B cell (primary cell): ENCODE measurements at regions of chrX and their contacts with region 1.

Region 1: DNA sequence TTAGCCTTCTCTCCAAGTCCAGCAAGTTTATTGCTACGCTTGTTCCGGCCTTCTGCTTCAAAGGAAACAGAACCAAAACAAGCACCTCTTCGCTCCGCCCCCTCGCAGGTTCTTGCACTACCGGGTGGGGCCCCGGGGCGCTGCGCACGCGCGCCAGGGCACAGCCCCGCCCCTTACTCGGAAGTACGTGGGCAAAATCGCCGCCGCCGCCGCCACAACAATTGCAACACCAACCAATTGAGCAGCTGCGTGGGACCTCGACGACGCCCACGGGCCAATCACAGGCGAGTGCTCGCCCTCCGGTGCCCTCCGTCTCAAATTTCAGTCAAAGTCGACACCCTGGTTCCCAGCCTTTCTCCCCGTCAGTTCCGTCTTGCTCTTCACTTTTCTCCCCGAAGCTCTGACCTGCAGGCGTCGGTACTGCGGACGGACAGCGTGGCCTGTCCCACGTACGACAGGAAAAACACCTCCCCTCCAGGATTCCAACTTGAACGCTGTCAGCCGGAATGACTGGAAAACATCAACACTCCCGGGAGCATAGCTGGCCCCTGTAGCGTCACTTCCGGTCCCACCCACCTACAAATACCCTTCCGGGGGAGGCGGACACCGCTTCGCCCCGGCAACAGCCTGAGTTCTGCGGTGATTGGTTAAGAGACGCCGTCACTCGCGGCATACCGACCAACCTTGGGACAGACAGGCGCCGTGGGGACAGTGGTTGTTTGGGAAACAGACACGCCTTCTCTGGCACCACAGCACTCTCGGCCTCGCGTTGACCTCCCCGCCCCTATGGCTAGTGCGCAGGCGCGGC is 624 bp upstream of the OTUD5 start:
- DNase-seq: peak; percentile 96
- ATAC-seq: peak; percentile 81
- H3K4me3 ChIP-seq: peak overlapping the region; percentile 8 to 75 (median 65)
- H3K4me3 Mint-ChIP-seq: peak overlapping the region; percentile 100
- H3K27ac ChIP-seq: peak overlapping the region; percentile 98 to 99
- H3K27ac Mint-ChIP-seq: peak overlapping the region; percentile 100
- H3K4me1 ChIP-seq: peaks cover 50 to 78% of the 10 kb centered on the region in 2 donors
- H3K4me1 Mint-ChIP-seq: peaks cover 61% of the 10 kb centered on the region
- H3K27me3 ChIP-seq: no peaks in the 10 kb centered on the region
- H3K27me3 Mint-ChIP-seq: no peaks in the 10 kb centered on the region
- CTCF ChIP-seq: no peak

Region 2: DNA sequence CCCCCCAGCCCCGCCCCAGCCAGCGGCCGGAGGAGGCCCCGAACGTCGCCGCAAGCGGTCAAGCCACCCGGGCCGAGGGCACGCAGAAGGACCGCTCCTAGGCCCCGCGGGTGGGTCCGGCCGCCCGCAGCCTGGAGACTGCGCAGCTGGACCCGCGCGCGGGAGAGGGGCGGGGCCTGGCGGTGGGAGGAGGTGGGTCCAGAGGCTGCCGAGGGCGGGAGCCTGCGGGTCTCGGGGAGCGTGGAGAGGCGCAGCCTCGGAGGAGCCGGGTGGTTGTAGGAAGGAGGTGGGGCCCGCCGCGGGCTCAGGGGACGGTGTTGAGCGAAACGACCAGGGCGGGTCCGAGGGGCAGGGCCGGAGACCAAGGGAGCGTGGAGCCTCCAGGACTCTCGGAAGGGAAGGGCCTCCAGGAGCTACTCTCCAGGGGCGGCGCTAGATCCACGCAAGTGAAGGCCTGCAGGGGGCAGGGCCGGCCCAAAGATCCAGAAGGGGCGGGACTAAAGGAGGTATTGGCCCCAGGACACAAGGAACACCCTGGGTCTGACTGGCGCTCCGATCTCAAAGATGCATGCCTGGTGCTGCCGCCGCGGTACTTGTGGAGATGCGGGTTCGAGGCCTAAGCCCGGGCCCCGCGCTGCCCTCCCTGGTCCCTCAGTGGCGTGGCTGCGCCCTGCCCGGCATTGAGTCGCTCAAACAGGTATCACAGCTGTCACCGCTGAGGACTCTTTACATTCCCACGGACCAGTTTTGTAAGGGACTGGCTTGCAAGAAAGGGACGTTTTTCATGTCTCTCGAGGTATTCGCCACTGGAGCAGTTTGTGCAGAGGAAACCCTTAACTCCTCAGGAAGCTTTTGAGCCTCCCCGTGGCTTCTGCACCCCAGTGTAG is 66.4 kb before region 1 on chrX:
- CTCF ChIA-PET with region 1: interaction called, 6 read pairs
- POLR2A ChIA-PET with region 1: interaction called, 8 read pairs
- intact Hi-C with region 1: loop called (anchors 2 kb)
- DNase-seq: peak; percentile 87
- ATAC-seq: peak; percentile 84
- H3K4me3 ChIP-seq: peak overlapping the region in 4 of 5 experiments; percentile 46 to 65 (median 60)
- H3K4me3 Mint-ChIP-seq: peak overlapping the region; percentile 84
- H3K27ac ChIP-seq: peak overlapping the region in 1 of 2 donors; percentile 48
- H3K27ac Mint-ChIP-seq: peak overlapping the region; percentile 73
- H3K4me1 ChIP-seq: peaks cover 6 to 9% of the 10 kb centered on the region in 2 donors
- H3K4me1 Mint-ChIP-seq: peaks cover 19% of the 10 kb centered on the region
- H3K27me3 ChIP-seq: no peaks in the 10 kb centered on the region
- H3K27me3 Mint-ChIP-seq: no peaks in the 10 kb centered on the region
- CTCF ChIP-seq: peak; percentile 60

Region 3: DNA sequence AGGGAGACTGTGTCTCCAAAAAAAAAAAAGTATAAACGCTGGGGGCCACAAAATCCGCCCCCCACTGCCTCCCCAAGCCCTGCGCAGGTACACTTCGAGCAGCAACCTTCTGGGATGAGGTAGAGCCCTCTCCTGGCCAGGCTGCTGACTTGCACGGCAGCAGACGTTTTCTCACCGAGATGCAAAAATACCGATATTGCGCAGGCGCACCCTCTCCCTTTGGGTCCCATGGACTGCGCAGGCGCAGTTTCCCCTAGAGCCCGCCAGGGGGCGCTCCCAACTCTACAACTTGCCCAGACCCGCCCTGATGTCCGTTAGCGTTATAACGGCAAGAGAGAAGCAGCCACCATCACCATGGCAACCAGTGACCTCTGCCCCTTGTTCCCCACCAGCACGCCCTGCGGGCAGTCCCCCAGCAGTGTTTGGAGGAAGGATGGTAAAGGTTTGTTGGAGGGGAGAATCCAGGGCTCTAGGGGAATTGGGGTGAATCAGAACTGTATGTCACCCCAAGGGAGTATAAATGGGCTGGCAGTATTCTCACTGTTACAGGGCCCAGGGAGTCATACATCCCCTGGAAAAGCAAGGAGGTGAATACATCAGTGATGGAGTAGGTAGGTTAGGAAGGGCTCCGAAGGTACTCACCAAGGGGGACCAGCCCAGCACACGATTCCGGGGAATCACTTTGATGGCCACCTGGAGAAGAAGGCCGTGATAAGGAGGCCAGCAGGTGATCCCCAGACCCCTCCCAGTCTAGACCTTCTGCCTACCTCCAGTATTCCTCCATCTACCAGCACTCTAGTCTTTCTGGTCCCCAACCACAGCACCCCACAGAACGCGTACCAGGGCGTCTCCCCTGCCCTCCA is 40.7 kb before region 1 on chrX:
- CTCF ChIA-PET with region 1: interaction called, 4 read pairs
- POLR2A ChIA-PET with region 1: interaction called, 10 read pairs
- intact Hi-C with region 1: loop called (anchors 1 kb)
- DNase-seq: peak; percentile 92
- ATAC-seq: peak; percentile 46
- H3K4me3 ChIP-seq: peak overlapping the region; percentile 67 to 94 (median 86)
- H3K4me3 Mint-ChIP-seq: peak overlapping the region; percentile 98
- H3K27ac ChIP-seq: peak overlapping the region; percentile 84
- H3K27ac Mint-ChIP-seq: peak overlapping the region; percentile 96
- H3K4me1 ChIP-seq: peaks cover 34 to 56% of the 10 kb centered on the region in 2 donors
- H3K4me1 Mint-ChIP-seq: peaks cover 51% of the 10 kb centered on the region
- H3K27me3 ChIP-seq: no peaks in the 10 kb centered on the region
- H3K27me3 Mint-ChIP-seq: no peaks in the 10 kb centered on the region
- CTCF ChIP-seq: peak; percentile 74

Region 4: GRCh38 chrX:49002091-49002935 is 44.3 kb after region 1 on chrX and contains the start of gene GRIPAP1:
- CTCF ChIA-PET with region 1: no interaction called
- POLR2A ChIA-PET with region 1: interaction called, 16 read pairs
- intact Hi-C with region 1: loop called (anchors 1 kb)
- DNase-seq: peak; percentile 93
- ATAC-seq: peak; percentile 85
- H3K4me3 ChIP-seq: peak within 1 kb of the TSS; percentile 66 to 93 (median 86)
- H3K4me3 Mint-ChIP-seq: peak within 1 kb of the TSS; percentile 95
- H3K27ac ChIP-seq: peak within 1 kb of the TSS; percentile 97 to 99
- H3K27ac Mint-ChIP-seq: peak within 1 kb of the TSS; percentile 98
- H3K4me1 ChIP-seq: peaks cover 8 to 14% of the 10 kb centered on the region in 2 donors
- H3K4me1 Mint-ChIP-seq: peaks cover 28% of the 10 kb centered on the region
- H3K27me3 ChIP-seq: no peaks in the 10 kb centered on the region
- H3K27me3 Mint-ChIP-seq: no peaks in the 10 kb centered on the region
- CTCF ChIP-seq: no peak
- total RNA-seq, gene GRIPAP1: 143 and 150 TPM in 2 replicates

Region 5: GRCh38 chrX:49191033-49191871 is 233.2 kb after region 1 on chrX:
- CTCF ChIA-PET with region 1: interaction called, 3 read pairs
- POLR2A ChIA-PET with region 1: interaction called, 3 read pairs
- intact Hi-C with region 1: loop called (anchors 1 kb)
- DNase-seq: peak; percentile 95
- ATAC-seq: peak; percentile 84
- H3K4me3 ChIP-seq: peak overlapping the region in 4 of 5 experiments; percentile 62 to 78 (median 70)
- H3K4me3 Mint-ChIP-seq: peak overlapping the region; percentile 95
- H3K27ac ChIP-seq: peak overlapping the region; percentile 55 to 71
- H3K27ac Mint-ChIP-seq: peak overlapping the region; percentile 96
- H3K4me1 ChIP-seq: peaks cover 0 to 20% of the 10 kb centered on the region in 2 donors
- H3K4me1 Mint-ChIP-seq: peaks cover 28% of the 10 kb centered on the region
- H3K27me3 ChIP-seq: no peaks in the 10 kb centered on the region
- H3K27me3 Mint-ChIP-seq: no peaks in the 10 kb centered on the region
- CTCF ChIP-seq: no peak